Astrocyte of the cerebellum (primary cell): ENCODE measurements at regions of chr14 and their contacts with region 1.

Region 1: GRCh38 chr14:33457021-33457420 is 493.9 kb downstream of the EGLN3 start:
- DNase-seq: no peak
- H3K4me3 ChIP-seq: no peak overlapping the region
- CTCF ChIP-seq: no peak

Region 2: GRCh38 chr14:33404055-33404454 is 53.0 kb before region 1 on chr14:
- in situ Hi-C with region 1: loop called (anchors 5 kb)
- DNase-seq: peak; percentile 89
- H3K4me3 ChIP-seq: no peak overlapping the region
- CTCF ChIP-seq: peak; percentile 29